ENCODE measurements at regions of chrX and their contacts with region 1.

Region 1: GRCh38 chrX:130060122-130061069 is 49.9 kb downstream of the ELF4 start:
- DNase-seq: peak; percentile 85
- ATAC-seq: peak; percentile 88
- H3K4me3 ChIP-seq: peak overlapping the region in 4 of 5 experiments; percentile 49 to 63 (median 56)
- H3K4me3 Mint-ChIP-seq: peak overlapping the region; percentile 82
- H3K27ac ChIP-seq: peak overlapping the region in 1 of 2 donors; percentile 54
- H3K27ac Mint-ChIP-seq: peak overlapping the region; percentile 79
- H3K4me1 ChIP-seq: peaks cover 3 to 11% of the 10 kb centered on the region in 2 donors
- H3K4me1 Mint-ChIP-seq: no peaks in the 10 kb centered on the region
- H3K27me3 ChIP-seq: no peaks in the 10 kb centered on the region
- H3K27me3 Mint-ChIP-seq: no peaks in the 10 kb centered on the region
- CTCF ChIP-seq: peak; percentile 76

Region 2: GRCh38 chrX:129606918-129607317 is 453.5 kb before region 1 on chrX:
- CTCF ChIA-PET with region 1: interaction called, 22 read pairs
- POLR2A ChIA-PET with region 1: no interaction called
- intact Hi-C with region 1: loop called (anchors 1 kb)
- DNase-seq: peak; percentile 68
- ATAC-seq: peak; percentile 63
- H3K4me3 ChIP-seq: no peak overlapping the region
- H3K4me3 Mint-ChIP-seq: no peak overlapping the region
- H3K27ac ChIP-seq: no peak overlapping the region
- H3K27ac Mint-ChIP-seq: no peak overlapping the region
- H3K4me1 ChIP-seq: peaks cover 12 to 15% of the 10 kb centered on the region in 2 donors
- H3K4me1 Mint-ChIP-seq: peaks cover 17% of the 10 kb centered on the region
- H3K27me3 ChIP-seq: no peaks in the 10 kb centered on the region
- H3K27me3 Mint-ChIP-seq: no peaks in the 10 kb centered on the region
- CTCF ChIP-seq: peak; percentile 72

Region 3: GRCh38 chrX:129925305-129926092 is 134.9 kb before region 1 on chrX:
- CTCF ChIA-PET with region 1: interaction called, 69 read pairs
- POLR2A ChIA-PET with region 1: no interaction called
- intact Hi-C with region 1: loop called (anchors 1 kb)
- DNase-seq: peak; percentile 79
- ATAC-seq: peak; percentile 66
- H3K4me3 ChIP-seq: no peak overlapping the region
- H3K4me3 Mint-ChIP-seq: no peak overlapping the region
- H3K27ac ChIP-seq: no peak overlapping the region
- H3K27ac Mint-ChIP-seq: no peak overlapping the region
- H3K4me1 ChIP-seq: no peaks in the 10 kb centered on the region
- H3K4me1 Mint-ChIP-seq: peaks cover 6% of the 10 kb centered on the region
- H3K27me3 ChIP-seq: no peaks in the 10 kb centered on the region
- H3K27me3 Mint-ChIP-seq: no peaks in the 10 kb centered on the region
- CTCF ChIP-seq: peak; percentile 69

Region 4: DNA sequence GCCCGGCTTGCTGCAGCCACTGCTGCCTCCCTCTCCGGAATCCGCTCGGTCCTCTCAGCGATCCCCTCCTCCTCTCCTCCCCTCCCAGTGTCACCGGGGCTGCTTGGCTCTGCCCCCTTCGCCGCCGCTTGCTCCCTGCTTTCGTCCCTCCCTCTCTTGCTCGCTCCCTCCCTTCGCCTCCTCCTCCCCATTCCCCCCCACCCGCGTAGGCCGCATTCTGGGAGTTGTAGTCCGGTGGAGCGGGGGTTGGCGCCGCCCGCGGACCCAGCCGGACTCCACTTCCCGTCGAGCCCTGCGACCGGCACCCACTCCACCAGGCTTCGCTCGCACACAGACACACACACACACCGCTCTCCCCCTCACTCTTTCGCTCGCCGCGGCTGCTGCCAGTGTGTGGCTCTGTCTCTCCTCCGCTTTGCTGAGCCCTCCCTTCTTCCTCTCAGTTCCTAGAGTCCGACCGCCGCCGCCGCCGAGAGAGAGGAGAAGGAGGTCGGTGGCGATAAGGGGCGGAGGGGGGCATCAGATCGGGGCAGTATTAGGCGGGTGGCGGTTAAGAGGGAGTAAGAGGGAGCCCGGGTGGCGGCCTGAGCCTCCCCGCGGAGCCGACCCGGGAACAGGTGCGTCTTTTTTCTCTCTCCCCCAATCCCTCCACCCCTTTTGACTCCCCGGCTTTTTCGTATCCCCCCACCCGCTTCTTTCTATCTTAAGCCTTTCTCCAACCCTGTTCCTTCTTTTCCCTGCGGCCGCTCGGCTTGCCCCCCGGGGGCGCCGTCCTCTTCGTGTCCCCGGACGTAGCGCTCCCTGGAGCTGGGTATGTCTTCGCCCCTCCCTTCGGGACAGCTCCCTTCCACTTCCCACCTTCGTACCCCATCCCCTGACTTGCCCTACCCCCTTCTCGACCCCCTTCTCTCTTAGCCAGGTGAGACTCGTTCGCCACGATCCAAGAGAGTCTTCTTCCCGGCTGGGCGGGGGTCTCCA is 77.8 kb before region 1 on chrX and contains the start of gene BCORL1:
- CTCF ChIA-PET with region 1: no interaction called
- POLR2A ChIA-PET with region 1: no interaction called
- intact Hi-C with region 1: loop called (anchors 1 kb)
- DNase-seq: peak; percentile 91
- ATAC-seq: peak; percentile 88
- H3K4me3 ChIP-seq: peak within 1 kb of the TSS in 2 of 5 experiments; percentile 57 to 62
- H3K4me3 Mint-ChIP-seq: no peak within 1 kb of the TSS
- H3K27ac ChIP-seq: peak within 1 kb of the TSS in 1 of 2 donors; percentile 41
- H3K27ac Mint-ChIP-seq: peak within 1 kb of the TSS; percentile 91
- H3K4me1 ChIP-seq: peaks cover 5 to 7% of the 10 kb centered on the region in 2 donors
- H3K4me1 Mint-ChIP-seq: peaks cover 19% of the 10 kb centered on the region
- H3K27me3 ChIP-seq: no peaks in the 10 kb centered on the region
- H3K27me3 Mint-ChIP-seq: no peaks in the 10 kb centered on the region
- CTCF ChIP-seq: no peak
- total RNA-seq, gene BCORL1: 14.3 and 14.4 TPM in 2 replicates

Region 5: GRCh38 chrX:130186651-130187050 is 126.3 kb after region 1 on chrX:
- CTCF ChIA-PET with region 1: interaction called, 15 read pairs
- POLR2A ChIA-PET with region 1: no interaction called
- intact Hi-C with region 1: no loop called
- DNase-seq: no peak
- ATAC-seq: no peak
- H3K4me3 ChIP-seq: no peak overlapping the region
- H3K4me3 Mint-ChIP-seq: no peak overlapping the region
- H3K27ac ChIP-seq: no peak overlapping the region
- H3K27ac Mint-ChIP-seq: no peak overlapping the region
- H3K4me1 ChIP-seq: peaks cover 0 to 9% of the 10 kb centered on the region in 2 donors
- H3K4me1 Mint-ChIP-seq: peaks cover 21% of the 10 kb centered on the region
- H3K27me3 ChIP-seq: no peaks in the 10 kb centered on the region
- H3K27me3 Mint-ChIP-seq: no peaks in the 10 kb centered on the region
- CTCF ChIP-seq: no peak

Measured in B cell (primary cell).